ENCODE measurements at regions of chr16 and their contacts with region 1.

Region 1: DNA sequence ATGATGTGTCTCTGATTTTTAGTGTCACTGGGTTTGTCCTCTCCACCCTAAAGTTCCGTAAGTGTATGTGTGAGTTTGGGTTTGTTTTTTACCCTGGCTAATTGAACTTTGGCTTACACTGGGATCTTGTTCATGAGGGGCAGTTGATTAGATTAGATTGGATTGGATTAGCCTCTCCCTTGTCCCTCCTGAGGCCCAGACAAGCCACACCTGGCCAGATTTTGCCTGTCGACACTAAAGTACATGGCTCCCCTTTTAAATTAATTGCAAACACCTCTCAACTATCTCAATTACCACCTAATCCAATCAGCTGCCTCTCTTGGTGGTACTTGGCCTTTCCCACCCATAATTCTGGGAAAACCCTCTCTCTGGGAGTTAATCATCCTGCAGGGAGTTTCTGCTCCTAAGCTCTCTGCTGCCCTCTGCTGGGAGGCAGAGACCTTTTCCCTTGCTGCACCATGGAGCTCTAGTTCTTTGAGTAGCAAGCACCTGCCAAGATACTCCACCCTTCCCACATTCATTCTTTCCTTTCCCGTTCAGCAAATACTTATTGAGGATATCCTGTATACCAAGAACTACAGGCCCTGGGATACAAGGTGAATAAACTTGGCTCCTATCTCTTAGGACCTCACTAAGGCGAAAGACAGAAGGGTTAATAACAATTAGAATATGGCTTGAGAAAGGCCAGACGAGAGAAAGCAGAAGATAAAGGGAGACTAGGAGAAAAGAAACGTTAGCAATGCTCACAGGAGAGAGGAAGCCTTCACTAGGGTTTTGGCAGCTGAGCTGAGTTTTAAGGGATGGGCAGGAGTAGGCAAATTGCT is 60.0 kb upstream of the MPHOSPH6 start:
- DNase-seq: peak; percentile 70 to 89 (median 75)
- H3K4me3 ChIP-seq: no peak overlapping the region
- H3K27ac ChIP-seq: no peak overlapping the region
- H3K4me1 ChIP-seq: no peaks in the 10 kb centered on the region
- H3K27me3 ChIP-seq: peaks cover 3% of the 10 kb centered on the region
- CTCF ChIP-seq: peak; percentile 84 to 98 (median 92)
- POLR2A ChIP-seq: no peak

Region 2: GRCh38 chr16:81891736-81892357 is 338.2 kb before region 1 on chr16:
- intact Hi-C with region 1: loop called (anchors 5 kb)
- DNase-seq: no peak
- H3K4me3 ChIP-seq: no peak overlapping the region
- H3K27ac ChIP-seq: no peak overlapping the region
- H3K4me1 ChIP-seq: no peaks in the 10 kb centered on the region
- H3K27me3 ChIP-seq: no peaks in the 10 kb centered on the region
- CTCF ChIP-seq: no peak
- POLR2A ChIP-seq: no peak

Region 3: DNA sequence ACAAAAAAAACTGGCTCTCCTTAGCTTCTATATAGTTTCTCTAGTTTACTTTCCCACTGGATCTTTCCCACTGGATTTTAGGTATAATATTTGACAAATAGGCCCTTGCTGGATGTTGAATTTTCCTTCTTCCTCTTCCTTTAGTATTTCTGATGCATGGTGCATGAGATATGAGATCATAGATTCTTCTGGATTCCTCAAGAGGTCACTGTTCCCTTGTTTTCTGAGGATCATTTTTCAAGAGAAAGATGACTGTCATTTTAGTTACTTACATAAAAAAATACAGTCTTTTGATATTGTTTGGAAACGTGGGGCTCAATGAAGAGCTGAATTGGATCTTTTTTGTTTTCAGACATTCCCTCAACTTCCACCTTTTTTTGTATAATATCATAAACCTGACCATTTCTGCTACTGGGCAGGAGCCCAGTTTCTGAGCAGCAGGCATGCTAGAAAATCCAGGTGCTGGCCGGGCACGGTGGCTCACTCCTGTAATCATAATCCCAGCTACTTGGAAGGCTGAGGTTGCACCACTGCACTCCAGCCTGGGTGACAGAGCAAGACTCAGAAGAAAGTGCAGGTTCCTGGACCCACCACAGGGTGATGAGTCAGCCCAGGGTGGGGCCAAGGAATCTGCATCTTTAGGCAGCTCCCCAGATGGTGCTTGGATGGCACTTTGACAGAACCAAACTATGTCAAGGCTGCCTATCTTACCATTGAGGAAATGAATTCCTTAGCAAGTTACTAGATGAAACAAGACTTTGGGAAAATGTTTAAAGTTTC is 289.0 kb before region 1 on chr16:
- intact Hi-C with region 1: loop called in 1 of 2 experiments (anchors 5 kb)
- DNase-seq: no peak
- H3K4me3 ChIP-seq: no peak overlapping the region
- H3K27ac ChIP-seq: no peak overlapping the region
- H3K4me1 ChIP-seq: no peaks in the 10 kb centered on the region
- H3K27me3 ChIP-seq: no peaks in the 10 kb centered on the region
- CTCF ChIP-seq: peak; percentile 36 to 58 (median 42)
- POLR2A ChIP-seq: no peak

Region 4: GRCh38 chr16:82031116-82032084 is 198.6 kb before region 1 on chr16:
- intact Hi-C with region 1: loop called (anchors 2 to 5 kb)
- DNase-seq: peak in 4 of 7 donors; percentile 19 to 36 (median 32)
- H3K4me3 ChIP-seq: no peak overlapping the region
- H3K27ac ChIP-seq: no peak overlapping the region
- H3K4me1 ChIP-seq: no peaks in the 10 kb centered on the region
- H3K27me3 ChIP-seq: no peaks in the 10 kb centered on the region
- CTCF ChIP-seq: peak; percentile 38 to 72 (median 65)
- POLR2A ChIP-seq: no peak